CD4-positive, alpha-beta memory T cell (primary cell): ENCODE measurements at regions of chr13 and their contacts with region 1.

Region 1: DNA sequence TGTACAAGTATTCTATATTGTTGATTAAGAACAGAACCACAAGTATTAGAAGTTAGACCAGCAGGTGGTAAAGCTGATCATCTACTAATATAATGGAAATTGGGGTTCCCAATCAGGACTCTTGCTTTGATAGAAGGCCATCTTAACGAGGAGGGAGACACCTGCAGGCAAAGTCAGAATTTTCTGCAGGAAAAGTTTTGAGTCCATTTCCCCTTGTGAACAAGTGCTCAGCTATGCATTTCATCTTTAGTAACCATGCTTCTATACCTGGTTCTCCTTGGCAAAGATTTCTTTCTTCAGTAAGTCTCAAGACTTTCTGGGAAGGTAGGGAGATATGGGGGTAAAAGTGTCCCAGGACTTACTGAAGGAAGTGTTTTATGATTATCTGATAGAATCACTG is 36.1 kb upstream of the USPL1 start:
- DNase-seq: peak in 4 of 5 donors; percentile 6 to 21 (median 12)
- H3K4me3 ChIP-seq: no peak overlapping the region
- H3K4me3 Mint-ChIP-seq: no peak overlapping the region
- H3K27ac ChIP-seq: no peak overlapping the region
- H3K27ac Mint-ChIP-seq: no peak overlapping the region
- H3K4me1 ChIP-seq: peaks cover 14% of the 10 kb centered on the region
- H3K4me1 Mint-ChIP-seq: peaks cover 11 to 19% (median 16%) of the 10 kb centered on the region in 4 donors
- H3K27me3 ChIP-seq: no peaks in the 10 kb centered on the region
- H3K27me3 Mint-ChIP-seq: peaks cover 0 to 1% of the 10 kb centered on the region in 2 donors

Region 2: GRCh38 chr13:30607908-30608307 is 26.3 kb after region 1 on chr13:
- CTCF ChIA-PET with region 1: interaction called, 12 read pairs
- POLR2A ChIA-PET with region 1: interaction called, 5 read pairs
- intact Hi-C with region 1: no loop called
- DNase-seq: peak; percentile 78 to 89 (median 83)
- H3K4me3 ChIP-seq: no peak overlapping the region
- H3K4me3 Mint-ChIP-seq: peak overlapping the region in 7 of 8 donors; percentile 10 to 50 (median 17)
- H3K27ac ChIP-seq: peak overlapping the region; percentile 17
- H3K27ac Mint-ChIP-seq: peak overlapping the region; percentile 84 to 90 (median 87)
- H3K4me1 ChIP-seq: peaks cover 19% of the 10 kb centered on the region
- H3K4me1 Mint-ChIP-seq: peaks cover 18 to 29% (median 18%) of the 10 kb centered on the region in 4 donors
- H3K27me3 ChIP-seq: no peaks in the 10 kb centered on the region
- H3K27me3 Mint-ChIP-seq: no peaks in the 10 kb centered on the region